ENCODE measurements at regions of chr17 and their contacts with region 1.

Region 1: GRCh38 chr17:44794851-44795413 is 35.2 kb downstream of the GJC1 start:
- DNase-seq: peak; percentile 41

Region 2: GRCh38 chr17:44409314-44410028 is 385.5 kb before region 1 on chr17:
- intact Hi-C with region 1: no loop called
- DNase-seq: no peak

Region 3: DNA sequence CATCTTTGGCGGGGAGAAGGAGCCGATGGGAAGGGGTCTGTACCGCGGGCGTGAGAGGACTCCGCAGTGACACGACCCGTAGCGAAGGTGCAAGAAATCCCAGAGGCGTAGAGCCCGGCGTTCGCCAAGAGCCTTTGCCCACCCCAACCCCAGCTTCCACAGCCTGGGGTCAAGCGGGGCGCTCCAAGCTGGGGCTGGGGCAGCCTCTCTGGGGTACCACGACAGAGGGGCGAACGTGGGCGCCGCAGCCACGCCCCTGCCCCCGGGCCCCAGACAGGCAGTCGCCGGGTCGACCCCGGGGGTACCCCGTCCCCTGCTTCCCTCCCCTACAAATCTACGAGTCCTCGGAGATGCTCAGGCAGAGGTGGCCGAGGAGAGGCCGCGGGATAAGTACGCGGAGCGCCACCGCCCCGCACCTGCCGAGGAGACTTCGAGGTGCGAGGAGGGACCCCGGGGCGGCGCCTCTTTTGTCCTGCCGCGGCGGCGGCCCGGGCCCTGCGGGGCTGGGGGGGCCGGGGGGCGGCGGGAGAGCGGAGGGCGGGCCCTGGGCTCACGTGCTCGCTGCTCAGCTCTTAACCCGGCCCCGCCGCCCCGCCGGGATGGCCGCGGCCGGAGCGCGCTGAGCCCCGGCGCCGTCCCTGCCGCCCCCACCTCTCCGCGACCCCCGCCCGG is 36.4 kb before region 1 on chr17 and contains the start of gene ADAM11:
- intact Hi-C with region 1: loop called in 1 of 2 experiments (anchors 1 kb)
- DNase-seq: no peak
- total RNA-seq, gene ADAM11: 0.29 to 0.42 TPM

Region 4: DNA sequence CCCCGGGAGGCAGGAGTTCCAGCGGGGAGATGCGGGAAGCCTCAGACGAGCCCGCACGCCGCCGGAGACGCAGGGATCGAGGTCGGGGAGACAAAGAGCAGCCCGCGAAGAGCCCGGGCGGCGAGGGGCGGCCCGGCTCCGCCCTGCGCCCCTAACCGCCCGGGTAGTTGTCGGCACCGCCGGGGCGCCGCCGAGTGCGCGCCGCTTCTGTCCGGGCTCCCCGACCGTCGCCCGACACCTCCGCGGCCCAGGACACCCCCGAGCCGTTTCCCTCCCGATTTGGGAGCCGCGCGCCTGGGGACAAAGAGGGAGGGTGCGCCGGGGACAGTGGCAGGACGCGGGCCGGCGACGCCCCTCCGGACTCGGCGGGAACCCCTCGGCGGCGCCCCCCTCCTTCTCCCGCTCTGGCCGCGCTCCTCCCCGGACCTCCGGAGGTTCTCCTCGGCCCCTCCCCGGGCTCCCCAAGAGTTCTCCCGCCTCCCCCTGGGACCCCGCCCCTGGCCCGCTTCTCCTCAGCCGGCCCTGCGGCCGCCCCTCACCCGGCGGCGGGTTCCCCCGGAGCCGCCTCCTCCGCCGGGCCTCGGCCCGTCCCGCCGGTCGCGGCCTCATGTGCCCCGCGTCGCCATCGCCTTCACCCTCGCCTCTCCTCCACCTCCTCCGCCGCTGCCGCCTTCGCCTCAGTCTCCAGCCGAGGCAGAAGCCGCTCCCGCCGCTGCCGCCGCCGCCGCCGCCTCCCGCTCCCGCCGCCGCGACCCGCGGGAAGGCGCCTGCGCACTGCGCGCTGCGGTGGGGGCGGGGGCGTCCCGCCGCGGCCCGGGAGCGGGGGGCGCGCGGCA is 34.8 kb after region 1 on chr17 and contains the start of gene GJC1:
- intact Hi-C with region 1: loop called in 1 of 2 experiments (anchors 5 kb)
- DNase-seq: peak; percentile 69
- total RNA-seq, gene GJC1: 30.4 to 80.8 TPM

Region 5: GRCh38 chr17:45051060-45051719 is 256.3 kb after region 1 on chr17 and contains the start of gene DCAKD:
- intact Hi-C with region 1: no loop called
- DNase-seq: peak; percentile 98
- total RNA-seq, gene DCAKD: 17.9 to 19.9 TPM